Left cardiac atrium (tissue), 4 donors: ENCODE measurements at regions of chr3 and their contacts with region 1.

Region 1: GRCh38 chr3:115239717-115240116 is 92.6 kb upstream of the ZBTB20 start:
- DNase-seq: peak; percentile 79
- ATAC-seq: peak; percentile 94 to 99

Region 2: GRCh38 chr3:115487968-115488367 is 248.3 kb after region 1 on chr3:
- intact Hi-C with region 1: no loop called
- DNase-seq: no peak
- ATAC-seq: no peak

Region 3: GRCh38 chr3:115512565-115513415 is 273.1 kb after region 1 on chr3:
- intact Hi-C with region 1: loop called in 1 of 2 experiments (anchors 5 kb)
- DNase-seq: peak; percentile 38
- ATAC-seq: peak; percentile 50 to 79